CD4-positive, alpha-beta memory T cell (primary cell): ENCODE measurements at regions of chr2 and their contacts with region 1.

Region 1: DNA sequence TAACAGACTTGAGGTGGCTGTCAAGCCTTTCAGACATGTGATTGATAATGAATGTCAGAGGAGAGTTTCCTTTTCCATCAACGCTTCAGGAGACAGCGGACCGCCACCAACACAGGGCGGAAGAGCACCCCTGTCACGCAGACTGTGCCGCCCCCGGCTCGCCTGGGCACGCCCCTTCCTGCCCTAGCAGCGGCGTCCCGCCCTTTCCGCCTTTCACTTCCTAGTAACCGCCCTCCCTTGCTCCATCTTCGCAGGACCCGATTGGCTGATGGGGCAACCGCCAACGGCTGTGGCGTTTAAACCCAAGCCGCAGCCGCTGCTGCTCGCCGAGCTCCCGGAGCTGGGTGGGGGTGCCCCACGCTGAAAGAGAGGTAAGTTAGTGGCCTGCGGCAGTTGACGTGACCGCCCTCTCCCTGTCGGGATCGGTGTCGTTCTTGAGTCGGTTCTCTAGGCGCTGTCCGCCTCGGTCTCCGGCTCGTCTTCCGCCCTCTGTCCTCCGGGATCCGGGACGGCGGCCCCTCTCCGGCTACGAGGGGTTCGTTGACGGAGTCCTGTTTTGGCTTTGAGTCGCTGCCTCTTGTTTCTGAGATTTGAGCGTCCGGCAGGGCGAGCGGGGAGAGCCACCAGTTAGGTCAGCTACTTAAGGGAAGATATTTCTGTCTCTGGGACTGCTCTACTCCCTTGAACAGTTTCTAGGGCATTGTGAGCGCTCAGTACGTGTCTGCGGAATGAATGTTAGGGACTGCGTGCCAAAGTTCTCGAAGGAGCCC is at the start of gene SGO2:
- DNase-seq: peak; percentile 93 to 97 (median 95)
- H3K4me3 ChIP-seq: peak within 1 kb of the TSS; percentile 82 to 98
- H3K4me3 Mint-ChIP-seq: peak within 1 kb of the TSS; percentile 91 to 97 (median 93)
- H3K27ac ChIP-seq: peak within 1 kb of the TSS; percentile 55
- H3K27ac Mint-ChIP-seq: peak within 1 kb of the TSS; percentile 83 to 93 (median 85)
- H3K4me1 ChIP-seq: peaks cover 14% of the 10 kb centered on the region
- H3K4me1 Mint-ChIP-seq: peaks cover 6 to 15% (median 12%) of the 10 kb centered on the region in 4 donors
- H3K27me3 ChIP-seq: no peaks in the 10 kb centered on the region
- H3K27me3 Mint-ChIP-seq: no peaks in the 10 kb centered on the region
- total RNA-seq, gene SGO2: 4.4 to 4.8 TPM

Region 2: DNA sequence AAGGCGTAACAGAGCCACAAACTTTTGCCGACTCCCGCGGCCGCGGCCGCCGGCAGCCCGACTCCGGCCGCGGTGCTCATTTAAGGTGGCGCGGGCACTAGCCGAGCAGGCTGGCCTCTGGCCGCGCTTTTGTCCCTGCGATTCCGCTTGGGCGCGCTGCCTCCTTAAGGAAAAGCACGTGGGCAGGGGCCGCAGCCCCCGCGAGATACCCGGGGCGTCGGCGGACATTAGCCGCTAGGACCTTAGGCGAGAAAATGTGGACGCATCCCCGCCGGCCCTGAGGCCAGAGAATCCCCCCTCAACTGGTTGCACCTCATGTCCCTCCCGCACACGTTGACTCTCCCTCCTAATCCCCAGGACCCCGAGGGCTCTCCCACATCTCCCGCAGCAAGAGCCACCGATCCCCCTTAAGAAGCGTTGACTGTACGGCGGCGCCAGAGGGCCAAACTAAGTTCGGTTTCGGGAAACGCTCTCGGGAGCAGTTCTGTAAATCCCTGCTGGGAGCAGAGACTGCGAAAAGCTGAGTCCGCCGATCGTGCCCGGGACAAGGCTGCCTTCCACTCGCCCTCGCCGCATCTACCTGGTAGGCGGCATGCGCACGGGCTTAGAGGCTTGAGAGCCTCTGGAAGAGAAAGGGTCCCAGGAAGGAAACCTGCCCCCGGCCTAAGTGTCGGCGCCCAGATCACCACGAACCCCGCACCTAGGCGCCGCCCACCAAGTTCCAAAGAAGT is 1066.6 kb before region 1 on chr2:
- CTCF ChIA-PET with region 1: no interaction called
- POLR2A ChIA-PET with region 1: no interaction called
- intact Hi-C with region 1: loop called (anchors 5 kb)
- DNase-seq: peak in 4 of 5 donors; percentile 45 to 58 (median 50)
- H3K4me3 ChIP-seq: peak overlapping the region; percentile 60 to 73
- H3K4me3 Mint-ChIP-seq: peak overlapping the region; percentile 90 to 98 (median 96)
- H3K27ac ChIP-seq: no peak overlapping the region
- H3K27ac Mint-ChIP-seq: peak overlapping the region in 6 of 7 donors; percentile 42 to 89 (median 70)
- H3K4me1 ChIP-seq: peaks cover 47% of the 10 kb centered on the region
- H3K4me1 Mint-ChIP-seq: peaks cover 20 to 44% (median 31%) of the 10 kb centered on the region in 4 donors
- H3K27me3 ChIP-seq: peaks cover 60% of the 10 kb centered on the region
- H3K27me3 Mint-ChIP-seq: peaks cover 36 to 39% of the 10 kb centered on the region in 2 donors

Region 3: DNA sequence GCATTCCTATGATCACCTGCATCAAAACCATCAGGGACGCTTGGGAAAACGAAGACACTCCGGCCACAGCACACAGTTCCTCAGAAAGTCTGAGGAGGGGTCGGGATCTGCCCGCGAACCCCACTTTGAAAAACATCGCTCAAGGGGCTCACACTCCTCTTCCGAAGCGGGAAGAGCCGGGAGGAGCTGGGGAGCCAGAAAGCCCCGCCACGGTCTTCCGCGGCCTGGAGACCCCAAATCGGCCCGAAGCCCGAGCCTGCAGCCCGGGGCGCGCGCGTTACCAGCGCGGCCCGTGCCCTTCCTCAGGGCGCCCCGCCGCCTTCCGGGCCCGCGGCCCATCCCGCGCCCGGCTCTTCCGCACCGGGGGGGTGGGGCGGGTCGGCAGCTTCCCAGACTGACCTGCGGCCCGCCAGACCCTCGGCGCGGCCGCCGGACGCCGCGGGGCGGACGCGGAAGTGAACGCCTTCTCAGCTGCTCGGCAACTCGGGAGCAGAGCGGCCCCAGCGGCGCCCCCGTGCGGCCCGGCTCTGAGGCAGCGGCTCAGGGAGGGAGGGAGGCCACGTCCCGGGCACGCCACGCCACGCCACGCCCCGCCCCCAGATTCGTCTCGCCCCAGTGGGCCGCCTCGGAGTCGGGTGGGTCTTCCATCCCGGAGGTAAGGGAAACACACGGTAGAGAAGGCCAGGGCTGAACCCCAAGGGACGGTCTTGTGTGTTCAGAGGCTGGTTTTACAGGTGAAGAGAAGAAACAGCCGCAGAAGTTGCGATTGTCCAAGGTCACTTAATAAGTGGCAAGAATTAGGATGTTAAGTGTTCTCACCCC is 16.2 kb before region 1 on chr2 and contains the start of gene KCTD18:
- CTCF ChIA-PET with region 1: interaction called, 20 read pairs
- POLR2A ChIA-PET with region 1: interaction called, 20 read pairs
- intact Hi-C with region 1: loop called (anchors 1 kb)
- DNase-seq: peak; percentile 85 to 90 (median 87)
- H3K4me3 ChIP-seq: peak within 1 kb of the TSS; percentile 81
- H3K4me3 Mint-ChIP-seq: peak within 1 kb of the TSS; percentile 91 to 98 (median 93)
- H3K27ac ChIP-seq: peak within 1 kb of the TSS; percentile 73
- H3K27ac Mint-ChIP-seq: peak within 1 kb of the TSS; percentile 94 to 98 (median 96)
- H3K4me1 ChIP-seq: peaks cover 29% of the 10 kb centered on the region
- H3K4me1 Mint-ChIP-seq: peaks cover 30 to 43% (median 32%) of the 10 kb centered on the region in 4 donors
- H3K27me3 ChIP-seq: no peaks in the 10 kb centered on the region
- H3K27me3 Mint-ChIP-seq: no peaks in the 10 kb centered on the region
- total RNA-seq, gene KCTD18: 19.2 to 21.1 TPM

Region 4: DNA sequence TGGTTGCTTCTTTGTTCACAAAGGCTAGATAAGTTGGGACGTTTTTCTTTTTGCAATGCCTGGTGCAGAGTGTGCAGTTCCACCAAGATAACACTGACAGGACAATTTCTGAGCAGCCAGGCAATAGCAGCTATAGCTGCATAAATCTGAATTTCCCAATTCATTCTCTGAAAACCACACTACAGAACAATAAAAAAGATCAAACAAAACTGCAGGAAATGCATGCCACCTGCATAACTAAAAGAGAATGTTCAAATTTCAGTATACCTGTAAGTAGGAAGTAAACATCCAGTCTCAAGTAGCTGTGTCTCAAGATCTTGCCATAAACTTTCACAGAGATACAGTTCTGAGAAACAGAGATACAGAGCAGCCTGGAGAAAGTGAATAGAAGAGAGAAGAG is 10.9 kb before region 1 on chr2:
- CTCF ChIA-PET with region 1: interaction called, 20 read pairs
- POLR2A ChIA-PET with region 1: interaction called, 20 read pairs
- intact Hi-C with region 1: loop called (anchors 1 kb)
- DNase-seq: peak in 4 of 5 donors; percentile 15 to 32 (median 22)
- H3K4me3 ChIP-seq: peak overlapping the region in 1 of 2 donors; percentile 5
- H3K4me3 Mint-ChIP-seq: peak overlapping the region in 6 of 8 donors; percentile 4 to 68 (median 23)
- H3K27ac ChIP-seq: no peak overlapping the region
- H3K27ac Mint-ChIP-seq: peak overlapping the region in 5 of 7 donors; percentile 23 to 88 (median 62)
- H3K4me1 ChIP-seq: peaks cover 29% of the 10 kb centered on the region
- H3K4me1 Mint-ChIP-seq: peaks cover 6 to 19% (median 17%) of the 10 kb centered on the region in 4 donors
- H3K27me3 ChIP-seq: no peaks in the 10 kb centered on the region
- H3K27me3 Mint-ChIP-seq: peaks cover 0 to 2% of the 10 kb centered on the region in 2 donors

Region 5: DNA sequence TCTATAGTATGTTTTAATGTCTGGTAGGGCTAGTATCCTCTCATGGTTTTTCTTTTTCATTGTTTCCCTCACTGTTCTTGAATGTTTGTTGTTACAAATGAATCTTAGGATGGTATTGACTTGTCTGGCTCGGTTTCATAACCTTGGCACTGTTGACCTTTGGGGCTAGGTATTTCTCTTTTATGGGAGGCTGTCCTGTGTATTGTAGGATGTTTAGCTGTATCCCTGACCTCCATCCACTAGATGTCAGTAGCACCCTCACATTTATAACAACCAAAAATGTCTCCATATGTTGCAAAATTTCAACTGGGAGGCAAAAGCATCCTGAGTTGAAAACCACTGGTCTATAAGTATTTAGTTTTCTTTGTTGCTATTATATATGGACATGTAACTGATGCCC is 52.7 kb after region 1 on chr2:
- CTCF ChIA-PET with region 1: no interaction called
- POLR2A ChIA-PET with region 1: no interaction called
- intact Hi-C with region 1: no loop called
- DNase-seq: no peak
- H3K4me3 ChIP-seq: no peak overlapping the region
- H3K4me3 Mint-ChIP-seq: no peak overlapping the region
- H3K27ac ChIP-seq: no peak overlapping the region
- H3K27ac Mint-ChIP-seq: peak overlapping the region in 1 of 7 donors; percentile 36
- H3K4me1 ChIP-seq: no peaks in the 10 kb centered on the region
- H3K4me1 Mint-ChIP-seq: peaks cover 0 to 4% (median under 1%) of the 10 kb centered on the region in 4 donors
- H3K27me3 ChIP-seq: no peaks in the 10 kb centered on the region
- H3K27me3 Mint-ChIP-seq: no peaks in the 10 kb centered on the region